ENCODE measurements at regions of chr19 and their contacts with region 1.

Region 1: GRCh38 chr19:4909897-4910593 is 744 bp downstream of the UHRF1 start:
- DNase-seq: peak; percentile 87 to 96 (median 92)
- ATAC-seq: peak; percentile 88
- H3K4me3 ChIP-seq: peak overlapping the region; percentile 51
- H3K4me3 Mint-ChIP-seq: peak overlapping the region; percentile 98
- H3K27ac ChIP-seq: no peak overlapping the region
- H3K27ac Mint-ChIP-seq: peak overlapping the region; percentile 84
- H3K4me1 ChIP-seq: peaks cover 58% of the 10 kb centered on the region
- H3K4me1 Mint-ChIP-seq: peaks cover 52% of the 10 kb centered on the region
- H3K27me3 ChIP-seq: no peaks in the 10 kb centered on the region
- H3K27me3 Mint-ChIP-seq: no peaks in the 10 kb centered on the region
- CTCF ChIP-seq: no peak

Region 2: GRCh38 chr19:4815426-4816201 is 94.4 kb before region 1 on chr19:
- CTCF ChIA-PET with region 1: interaction called, 35 read pairs
- POLR2A ChIA-PET with region 1: interaction called, 15 read pairs
- intact Hi-C with region 1: loop called in 1 of 2 experiments (anchors 1 kb)
- DNase-seq: peak; percentile 51 to 88 (median 64)
- ATAC-seq: peak; percentile 87
- H3K4me3 ChIP-seq: peak overlapping the region; percentile 24
- H3K4me3 Mint-ChIP-seq: peak overlapping the region; percentile 52
- H3K27ac ChIP-seq: no peak overlapping the region
- H3K27ac Mint-ChIP-seq: peak overlapping the region; percentile 8
- H3K4me1 ChIP-seq: peaks cover 17% of the 10 kb centered on the region
- H3K4me1 Mint-ChIP-seq: peaks cover 17% of the 10 kb centered on the region
- H3K27me3 ChIP-seq: no peaks in the 10 kb centered on the region
- H3K27me3 Mint-ChIP-seq: no peaks in the 10 kb centered on the region
- CTCF ChIP-seq: no peak

Region 3: DNA sequence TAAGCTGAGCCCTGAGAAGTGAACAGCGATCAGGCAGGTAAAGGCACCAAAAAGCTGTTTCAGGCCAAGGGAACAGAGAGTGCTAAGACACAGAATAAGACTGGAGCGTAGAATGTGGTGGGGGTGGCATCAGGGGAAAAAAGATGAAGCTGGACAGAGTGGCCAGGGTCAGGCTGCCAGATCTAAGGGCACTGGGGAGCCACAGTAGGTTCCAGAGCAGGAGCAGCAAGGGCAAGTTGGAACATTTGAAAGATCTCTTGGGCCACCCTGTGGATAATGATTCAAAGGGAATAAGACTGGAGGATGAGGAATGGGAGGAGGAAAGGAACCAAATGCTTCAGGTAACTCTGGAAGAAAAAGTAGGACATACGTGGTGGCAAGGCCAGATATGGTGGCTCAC is 36.1 kb before region 1 on chr19:
- CTCF ChIA-PET with region 1: interaction called, 60 read pairs
- POLR2A ChIA-PET with region 1: interaction called, 24 read pairs
- intact Hi-C with region 1: loop called (anchors 1 kb)
- DNase-seq: no peak
- ATAC-seq: no peak
- H3K4me3 ChIP-seq: no peak overlapping the region
- H3K4me3 Mint-ChIP-seq: no peak overlapping the region
- H3K27ac ChIP-seq: no peak overlapping the region
- H3K27ac Mint-ChIP-seq: no peak overlapping the region
- H3K4me1 ChIP-seq: peaks cover 18% of the 10 kb centered on the region
- H3K4me1 Mint-ChIP-seq: peaks cover 4% of the 10 kb centered on the region
- H3K27me3 ChIP-seq: no peaks in the 10 kb centered on the region
- H3K27me3 Mint-ChIP-seq: peaks cover 11% of the 10 kb centered on the region
- CTCF ChIP-seq: no peak

Region 4: DNA sequence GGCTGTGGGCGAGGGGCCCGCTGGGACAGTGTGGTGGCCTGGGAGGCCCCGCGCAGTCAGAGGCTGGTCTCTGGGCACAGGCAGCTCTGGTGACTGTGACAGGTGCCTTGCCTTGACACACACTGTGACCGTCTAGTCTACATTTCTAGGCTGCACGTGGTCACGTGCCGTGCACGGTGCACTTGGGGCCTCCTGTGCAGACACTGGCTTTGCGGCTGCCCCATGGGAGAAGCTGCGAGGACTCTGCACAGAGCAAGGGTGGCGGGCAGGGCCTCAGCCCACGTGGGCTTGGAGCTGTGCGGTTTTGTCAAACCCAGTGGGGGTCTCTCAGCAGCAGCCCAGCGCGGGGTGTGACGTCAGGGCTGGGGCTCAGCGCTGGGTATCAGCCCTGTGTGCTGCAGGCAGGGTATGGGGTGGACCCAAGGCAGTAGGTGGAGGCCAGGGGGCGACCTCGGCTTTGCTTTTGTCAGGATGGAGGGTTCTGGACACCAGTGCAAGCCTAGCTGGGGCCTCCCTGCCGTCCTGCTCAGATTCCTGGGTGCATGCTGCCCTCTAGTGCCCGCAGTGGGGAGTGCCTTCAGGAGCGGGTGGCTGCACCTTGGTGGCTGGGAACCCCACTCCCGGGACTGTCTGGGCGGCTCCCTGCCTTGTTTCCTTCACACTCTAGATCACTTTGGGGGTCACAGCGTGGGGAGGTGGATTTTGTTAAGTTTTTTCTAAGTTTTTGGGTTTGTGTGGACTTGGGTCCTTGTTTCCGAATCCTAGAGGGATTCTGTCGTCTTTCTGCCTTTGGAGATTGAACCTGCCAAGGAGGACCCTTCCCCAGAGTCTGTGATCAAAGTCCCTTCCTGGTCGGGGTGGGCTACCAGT is 121.4 kb after region 1 on chr19:
- CTCF ChIA-PET with region 1: interaction called, 8 read pairs
- POLR2A ChIA-PET with region 1: no interaction called
- intact Hi-C with region 1: loop called in 1 of 2 experiments (anchors 5 kb)
- DNase-seq: peak; percentile 59 to 87 (median 78)
- ATAC-seq: peak; percentile 89
- H3K4me3 ChIP-seq: no peak overlapping the region
- H3K4me3 Mint-ChIP-seq: no peak overlapping the region
- H3K27ac ChIP-seq: no peak overlapping the region
- H3K27ac Mint-ChIP-seq: no peak overlapping the region
- H3K4me1 ChIP-seq: peaks cover 13% of the 10 kb centered on the region
- H3K4me1 Mint-ChIP-seq: no peaks in the 10 kb centered on the region
- H3K27me3 ChIP-seq: no peaks in the 10 kb centered on the region
- H3K27me3 Mint-ChIP-seq: no peaks in the 10 kb centered on the region
- CTCF ChIP-seq: peak; percentile 92